ENCODE measurements at regions of chr11 and their contacts with region 1.

Region 1: GRCh38 chr11:131674051-131674755 is 303.8 kb downstream of the NTM start:
- DNase-seq: peak; percentile 86
- ATAC-seq: peak; percentile 62
- H3K4me3 Mint-ChIP-seq: no peak overlapping the region
- H3K27ac Mint-ChIP-seq: no peak overlapping the region
- H3K4me1 Mint-ChIP-seq: peaks cover 32% of the 10 kb centered on the region
- H3K27me3 Mint-ChIP-seq: no peaks in the 10 kb centered on the region; the same call in 1 of the 2 replicates
- CTCF ChIP-seq: peak; percentile 98

Region 2: DNA sequence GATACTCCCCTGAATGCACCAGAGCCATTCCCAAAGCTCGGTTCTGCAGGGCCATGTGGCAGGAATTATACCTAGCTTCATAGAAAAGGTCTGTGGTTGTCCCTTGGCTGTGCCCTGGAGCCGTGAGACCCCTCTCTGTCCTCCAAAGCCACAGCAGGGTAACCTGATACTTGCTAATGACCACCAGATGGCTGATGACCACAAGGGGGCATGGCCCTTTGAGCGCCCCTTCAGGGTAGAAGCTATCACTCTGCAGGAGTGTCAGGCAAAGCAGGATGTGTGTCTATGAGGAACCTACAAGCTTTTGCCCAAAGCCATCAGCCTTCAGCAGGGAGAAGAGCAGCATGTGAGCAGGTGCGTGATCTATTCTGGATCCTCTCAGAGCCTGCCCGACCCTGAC is 208.5 kb before region 1 on chr11:
- CTCF ChIA-PET with region 1: interaction called, 11 read pairs
- POLR2A ChIA-PET with region 1: no interaction called
- DNase-seq: peak; percentile 78
- ATAC-seq: peak; percentile 97
- H3K4me3 Mint-ChIP-seq: no peak overlapping the region
- H3K27ac Mint-ChIP-seq: peak overlapping the region; percentile 87
- H3K4me1 Mint-ChIP-seq: peaks cover 42% of the 10 kb centered on the region
- H3K27me3 Mint-ChIP-seq: no peaks in the 10 kb centered on the region
- CTCF ChIP-seq: 0 out of 2 replicates have a peak, but pooled peaks have one; percentile 25

Region 3: GRCh38 chr11:131544591-131544990 is 129.6 kb before region 1 on chr11:
- CTCF ChIA-PET with region 1: interaction called, 15 read pairs
- POLR2A ChIA-PET with region 1: no interaction called
- DNase-seq: peak; percentile 68
- ATAC-seq: peak; percentile 93
- H3K4me3 Mint-ChIP-seq: no peak overlapping the region
- H3K27ac Mint-ChIP-seq: no peak overlapping the region
- H3K4me1 Mint-ChIP-seq: peaks cover 25% of the 10 kb centered on the region
- H3K27me3 Mint-ChIP-seq: no peaks in the 10 kb centered on the region
- CTCF ChIP-seq: no peak

Region 4: DNA sequence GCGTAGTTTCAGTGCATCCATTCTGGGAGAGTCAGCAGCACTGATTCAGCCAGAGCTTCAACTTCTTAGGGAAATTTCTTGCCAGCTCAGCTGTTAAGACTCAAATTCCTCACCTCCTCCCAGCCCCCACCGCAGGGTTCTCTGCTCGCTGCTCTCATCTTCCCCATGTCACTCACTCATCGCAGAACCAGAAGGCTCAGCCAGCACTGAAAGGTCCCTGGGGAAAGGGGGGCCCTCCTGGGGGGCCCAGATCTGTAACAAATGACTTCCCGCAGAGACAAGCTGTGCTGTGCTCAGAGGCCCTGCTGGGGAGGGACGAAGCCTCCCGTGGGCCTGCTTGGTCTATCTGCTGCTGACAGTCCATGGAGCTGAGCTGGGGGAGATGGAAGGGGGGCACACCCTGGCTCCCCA is 83.1 kb before region 1 on chr11:
- CTCF ChIA-PET with region 1: interaction called, 45 read pairs
- POLR2A ChIA-PET with region 1: no interaction called
- DNase-seq: peak; percentile 45
- ATAC-seq: peak; percentile 66
- H3K4me3 Mint-ChIP-seq: no peak overlapping the region
- H3K27ac Mint-ChIP-seq: no peak overlapping the region
- H3K4me1 Mint-ChIP-seq: peaks cover 56% of the 10 kb centered on the region
- H3K27me3 Mint-ChIP-seq: no peaks in the 10 kb centered on the region; the same call in 1 of the 2 replicates
- CTCF ChIP-seq: no peak

Region 5: DNA sequence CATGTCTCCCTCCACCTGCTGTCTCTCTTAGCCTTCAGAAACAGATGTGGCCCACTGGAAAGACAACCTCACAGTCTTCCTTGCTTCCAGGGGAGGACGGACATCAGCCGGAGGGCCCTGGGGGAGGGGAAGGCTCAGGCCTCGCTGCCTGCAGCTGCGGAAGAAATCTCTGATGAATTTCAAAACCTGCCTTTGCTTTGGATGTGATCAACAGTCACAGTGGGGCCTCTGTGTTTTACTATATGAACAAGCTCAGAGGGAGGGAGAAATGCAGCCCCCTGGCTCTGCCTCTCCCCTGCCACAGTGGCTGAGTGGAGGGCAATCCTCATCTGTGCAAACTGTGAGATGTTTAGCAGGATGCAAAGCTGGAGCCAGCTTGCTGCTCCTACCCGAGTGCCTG is 20.9 kb before region 1 on chr11:
- CTCF ChIA-PET with region 1: interaction called, 69 read pairs
- POLR2A ChIA-PET with region 1: interaction called, 3 read pairs
- DNase-seq: no peak
- ATAC-seq: no peak
- H3K4me3 Mint-ChIP-seq: no peak overlapping the region
- H3K27ac Mint-ChIP-seq: 0 out of 2 replicates have a peak overlapping the region, but pooled peaks have one; percentile 52
- H3K4me1 Mint-ChIP-seq: peaks cover 65% of the 10 kb centered on the region
- H3K27me3 Mint-ChIP-seq: no peaks in the 10 kb centered on the region; the same call in 1 of the 2 replicates
- CTCF ChIP-seq: no peak

Region 6: DNA sequence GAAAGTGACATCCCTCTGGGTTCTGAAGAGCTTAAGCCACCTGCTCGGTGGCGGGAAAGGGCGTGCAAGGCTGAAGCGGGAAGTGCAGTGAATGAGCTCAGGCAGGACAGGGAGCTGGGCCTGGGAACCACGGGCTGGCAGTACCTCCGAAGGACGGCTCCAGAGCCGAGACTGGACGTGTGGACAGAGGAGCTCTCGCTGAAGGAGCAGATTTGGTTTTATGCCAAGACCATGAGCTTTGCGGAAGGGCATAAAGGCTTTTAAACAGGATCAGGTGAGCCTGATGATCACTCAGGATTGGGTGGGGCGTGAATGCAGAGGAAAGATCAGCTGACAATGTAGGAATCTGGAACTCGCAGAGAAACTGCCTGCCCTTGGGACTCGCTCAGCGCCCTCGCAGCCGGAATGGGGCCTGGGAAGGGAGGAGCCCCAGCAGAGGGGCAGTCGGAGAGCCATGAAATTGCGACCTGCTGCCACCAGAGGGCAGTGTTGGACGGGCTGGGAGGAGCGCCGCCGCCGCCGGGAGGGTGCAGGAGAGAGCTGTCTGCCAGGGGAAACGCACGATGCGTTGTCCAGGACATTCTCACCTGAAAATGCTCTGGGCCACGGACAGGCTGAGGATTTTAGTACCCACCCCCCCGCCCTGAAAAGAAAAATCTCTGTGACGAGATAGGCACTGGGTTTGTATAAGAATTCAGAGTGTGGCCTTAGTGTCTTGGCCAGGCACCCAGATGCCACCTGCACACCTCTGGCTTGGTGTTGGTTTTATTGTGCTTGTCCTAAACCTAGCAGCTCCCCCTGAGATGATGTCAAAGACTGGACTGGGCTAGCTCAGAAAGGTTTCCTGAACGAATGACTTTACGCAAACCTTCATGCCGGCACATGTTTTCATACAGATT is 20.6 kb after region 1 on chr11:
- CTCF ChIA-PET with region 1: interaction called, 23 read pairs
- POLR2A ChIA-PET with region 1: no interaction called
- DNase-seq: peak; percentile 92
- ATAC-seq: peak; percentile 85
- H3K4me3 Mint-ChIP-seq: peak overlapping the region; percentile 38
- H3K27ac Mint-ChIP-seq: no peak overlapping the region
- H3K4me1 Mint-ChIP-seq: peaks cover 9% of the 10 kb centered on the region
- H3K27me3 Mint-ChIP-seq: peaks cover 45% of the 10 kb centered on the region
- CTCF ChIP-seq: peak; percentile 96

Measured in WTC11 (cell line).